ENCODE measurements at regions of chr1 and their contacts with region 1.

Region 1: GRCh38 chr1:84996846-84997666 is at the start of gene MCOLN2:
- DNase-seq: peak; percentile 43
- H3K4me3 Mint-ChIP-seq: peak within 1 kb of the TSS; percentile 79
- H3K27ac Mint-ChIP-seq: peak within 1 kb of the TSS; percentile 80
- H3K4me1 Mint-ChIP-seq: peaks cover 40% of the 10 kb centered on the region
- H3K27me3 Mint-ChIP-seq: peaks cover 17% of the 10 kb centered on the region
- total RNA-seq, gene MCOLN2: 7.4 to 8.4 TPM

Region 2: GRCh38 chr1:84506002-84506728 is 490.9 kb before region 1 on chr1 and contains the starts of genes GNG5 and SPATA1:
- CTCF ChIA-PET with region 1: no interaction called
- intact Hi-C with region 1: loop called (anchors 10 kb)
- DNase-seq: peak; percentile 97
- H3K4me3 Mint-ChIP-seq: peak within 1 kb of the TSS; percentile 100
- H3K27ac Mint-ChIP-seq: peak within 1 kb of the TSS; percentile 98
- H3K4me1 Mint-ChIP-seq: peaks cover 27% of the 10 kb centered on the region
- H3K27me3 Mint-ChIP-seq: no peaks in the 10 kb centered on the region
- total RNA-seq, gene GNG5: 128 to 132 TPM
- total RNA-seq, gene SPATA1: 1.8 to 2.7 TPM

Region 3: DNA sequence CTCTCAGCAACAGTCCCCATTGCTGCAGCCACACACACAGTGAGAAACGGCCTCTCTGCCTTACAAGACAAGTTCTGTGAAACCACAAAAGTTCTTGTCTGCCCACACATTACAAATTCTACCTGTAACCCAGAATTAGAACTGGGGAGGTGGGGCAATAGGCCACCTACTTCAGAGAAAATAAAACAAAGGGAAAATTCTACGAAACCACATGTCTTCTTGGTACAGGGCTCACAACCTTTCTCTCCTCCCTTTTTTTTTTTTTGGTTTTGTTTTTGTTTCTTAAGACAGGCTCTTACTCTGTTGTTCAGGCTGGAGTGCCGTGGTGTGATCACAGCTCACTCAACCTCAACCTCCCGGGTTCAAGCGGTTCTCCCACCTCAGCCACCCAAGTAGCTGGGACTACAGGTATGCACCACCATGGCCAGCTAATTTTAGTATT is 134.2 kb before region 1 on chr1:
- CTCF ChIA-PET with region 1: no interaction called
- intact Hi-C with region 1: loop called (anchors 1 kb)
- DNase-seq: peak; percentile 63
- H3K4me3 Mint-ChIP-seq: peak overlapping the region; percentile 16
- H3K27ac Mint-ChIP-seq: peak overlapping the region; percentile 51
- H3K4me1 Mint-ChIP-seq: peaks cover 49% of the 10 kb centered on the region
- H3K27me3 Mint-ChIP-seq: peaks cover 3% of the 10 kb centered on the region

Region 4: DNA sequence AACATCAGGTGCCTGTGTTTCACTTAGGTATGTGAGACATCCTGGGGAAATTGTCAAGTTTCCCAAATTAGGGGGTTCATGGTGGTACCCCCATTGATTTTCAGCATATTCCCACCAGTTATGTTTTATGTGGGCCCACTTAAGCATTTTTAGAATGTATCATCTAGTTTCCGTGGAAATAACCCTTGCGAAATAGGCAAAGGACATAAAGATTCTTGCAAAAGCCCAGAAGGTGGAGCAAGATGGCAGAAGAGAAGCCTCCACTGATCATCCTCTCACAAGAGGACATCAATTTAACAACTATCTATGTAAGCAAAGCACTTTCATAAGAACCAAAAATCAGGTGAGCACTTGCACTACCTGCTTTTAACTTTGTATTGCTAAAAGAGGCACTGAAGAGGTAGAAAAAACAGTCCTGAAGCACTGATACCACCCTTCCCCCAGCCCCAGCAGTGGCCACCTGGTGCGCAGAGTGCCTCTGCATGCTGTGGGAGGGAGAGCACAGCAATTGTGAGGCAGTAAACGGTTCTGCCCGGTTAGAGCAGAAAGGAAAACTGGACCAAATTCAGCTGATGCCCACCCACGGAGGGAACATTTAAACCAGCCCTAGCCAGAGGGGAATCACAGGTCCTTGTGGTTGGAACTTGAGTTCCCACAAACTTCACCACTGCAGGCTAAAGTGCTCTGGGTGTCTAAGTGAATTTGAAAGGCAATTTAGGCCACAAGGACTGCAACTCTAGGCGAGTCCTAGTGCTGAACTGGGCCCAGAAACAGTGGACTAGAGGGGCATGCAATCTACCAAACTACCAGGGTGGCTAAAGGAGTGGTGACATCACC is 23.3 kb before region 1 on chr1:
- CTCF ChIA-PET with region 1: no interaction called
- intact Hi-C with region 1: loop called (anchors 1 kb)
- DNase-seq: no peak
- H3K4me3 Mint-ChIP-seq: no peak overlapping the region
- H3K27ac Mint-ChIP-seq: no peak overlapping the region
- H3K4me1 Mint-ChIP-seq: peaks cover 17% of the 10 kb centered on the region
- H3K27me3 Mint-ChIP-seq: peaks cover 2% of the 10 kb centered on the region

Region 5: GRCh38 chr1:85061711-85062424 is 64.8 kb after region 1 on chr1:
- CTCF ChIA-PET with region 1: no interaction called
- intact Hi-C with region 1: loop called (anchors 5 kb)
- DNase-seq: peak; percentile 93
- H3K4me3 Mint-ChIP-seq: peak overlapping the region; percentile 82
- H3K27ac Mint-ChIP-seq: peak overlapping the region; percentile 60
- H3K4me1 Mint-ChIP-seq: peaks cover 10% of the 10 kb centered on the region
- H3K27me3 Mint-ChIP-seq: no peaks in the 10 kb centered on the region

Region 6: DNA sequence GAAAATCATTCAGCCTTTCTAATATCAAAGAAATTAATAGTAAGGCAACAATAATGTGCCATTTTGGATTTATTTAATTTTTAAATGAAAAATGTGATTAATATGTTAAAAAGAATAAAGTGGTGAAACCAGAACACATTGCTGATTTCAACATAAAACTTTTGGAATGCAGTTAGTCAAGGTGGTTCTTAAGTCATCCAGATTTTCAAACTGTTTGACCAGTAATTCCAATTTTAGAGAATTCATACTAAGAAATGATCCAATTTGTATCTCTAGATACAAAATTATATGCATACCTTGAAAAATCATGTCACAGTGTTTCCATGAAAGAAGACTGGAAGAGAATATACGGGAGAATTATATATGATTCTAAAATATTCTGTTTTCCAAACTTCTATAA is 105.4 kb after region 1 on chr1:
- CTCF ChIA-PET with region 1: no interaction called
- intact Hi-C with region 1: no loop called
- DNase-seq: no peak
- H3K4me3 Mint-ChIP-seq: no peak overlapping the region
- H3K27ac Mint-ChIP-seq: no peak overlapping the region
- H3K4me1 Mint-ChIP-seq: no peaks in the 10 kb centered on the region
- H3K27me3 Mint-ChIP-seq: peaks cover 2% of the 10 kb centered on the region

Region 7: DNA sequence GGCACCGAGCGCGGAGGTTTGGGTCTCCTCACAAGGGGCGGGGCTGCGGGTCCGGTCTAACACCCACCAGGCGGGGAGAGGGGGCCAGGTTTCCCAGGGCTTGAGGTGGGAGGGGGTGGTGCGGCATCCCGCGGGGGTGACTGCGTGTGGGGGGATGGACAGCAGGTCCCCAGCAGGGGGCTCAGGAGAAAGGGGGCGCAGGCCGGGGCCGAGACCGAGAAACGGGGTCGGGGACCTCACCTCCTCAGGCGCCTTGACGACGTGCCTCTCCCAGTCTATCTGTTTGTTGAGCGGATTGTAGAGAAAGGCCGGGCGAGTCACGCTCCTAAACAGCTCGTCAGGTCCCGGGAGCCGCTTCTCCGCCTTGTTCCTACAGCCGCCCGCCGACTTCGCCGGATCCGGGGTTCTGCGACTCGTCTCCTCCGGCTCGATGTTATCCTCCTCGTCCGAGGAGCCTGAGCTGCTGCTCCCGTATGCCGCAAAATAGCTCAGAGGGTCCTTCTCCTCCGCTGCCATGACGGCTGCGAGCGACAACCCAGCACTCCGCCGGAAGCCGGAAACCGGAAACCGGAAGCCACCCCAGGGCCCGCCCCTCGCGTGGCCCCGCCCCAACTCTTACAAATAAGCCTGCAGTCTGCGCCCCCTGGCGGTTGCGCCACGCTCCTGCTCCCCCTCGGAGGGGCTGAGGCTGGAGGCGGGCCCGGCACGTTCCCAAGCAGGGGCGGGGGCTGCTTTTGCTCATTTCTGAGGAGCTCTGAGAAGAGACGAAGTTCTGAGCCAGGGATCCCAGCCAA is 262.3 kb after region 1 on chr1 and contains the start of gene C1orf52:
- CTCF ChIA-PET with region 1: no interaction called
- intact Hi-C with region 1: loop called (anchors 1 kb)
- DNase-seq: peak; percentile 97
- H3K4me3 Mint-ChIP-seq: peak within 1 kb of the TSS; percentile 96
- H3K27ac Mint-ChIP-seq: peak within 1 kb of the TSS; percentile 89
- H3K4me1 Mint-ChIP-seq: peaks cover 38% of the 10 kb centered on the region
- H3K27me3 Mint-ChIP-seq: no peaks in the 10 kb centered on the region
- total RNA-seq, gene C1orf52: 28.3 to 29.5 TPM